ENCODE measurements at regions of chr2 and their contacts with region 1.

Region 1: GRCh38 chr2:219388127-219388844 is 574 bp upstream of the DNPEP start:
- DNase-seq: peak; percentile 99
- H3K4me3 ChIP-seq: peak overlapping the region; percentile 30
- H3K27ac ChIP-seq: peak overlapping the region in 1 of 2 donors; percentile 79
- H3K4me1 ChIP-seq: peaks cover 6% of the 10 kb centered on the region
- H3K27me3 ChIP-seq: no peaks in the 10 kb centered on the region
- CTCF ChIP-seq: peak; percentile 76 to 90 (median 89)
- EP300 ChIP-seq: no peak
- POLR2A ChIP-seq: peak; percentile 21

Region 2: DNA sequence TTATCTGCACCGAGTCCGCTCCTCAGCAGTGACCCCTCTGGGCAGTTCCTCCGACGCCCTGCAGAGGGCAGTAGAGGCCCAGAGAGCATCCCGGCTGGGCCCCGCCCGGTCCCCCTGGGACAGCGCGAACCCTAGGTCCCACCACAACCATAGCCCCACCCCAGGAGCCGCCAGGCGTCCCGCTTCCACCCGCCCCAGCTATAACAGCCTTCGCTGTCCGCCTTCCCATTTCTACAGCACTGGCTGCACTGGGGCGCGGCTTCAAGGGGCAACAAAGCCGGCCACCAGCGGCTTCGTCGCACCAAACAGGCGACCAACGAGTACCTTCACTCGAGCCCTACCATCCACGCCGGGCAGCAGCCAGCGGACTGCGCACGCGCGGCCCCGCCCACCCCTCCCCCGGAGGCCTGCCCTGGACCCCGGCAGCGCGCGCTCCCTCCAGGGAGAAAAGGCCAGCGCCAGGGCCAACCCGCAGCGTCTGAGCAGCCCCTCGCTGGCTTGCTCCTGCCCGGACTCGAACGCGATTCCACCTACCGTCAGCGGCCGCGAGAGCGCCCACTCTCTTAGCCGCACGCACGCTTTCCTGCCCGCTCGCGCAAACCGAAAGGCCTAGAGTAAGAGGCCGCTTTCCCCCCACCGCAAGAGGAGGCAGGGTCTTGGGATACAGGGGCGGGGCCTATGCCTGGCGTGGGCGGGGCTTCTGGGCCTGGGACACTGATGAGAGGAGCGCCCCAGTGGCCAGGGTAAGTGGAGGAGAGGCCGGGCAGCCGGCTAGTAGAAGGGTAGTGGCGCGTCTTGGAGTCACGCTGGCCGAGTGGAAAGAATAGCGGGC is 227.9 kb before region 1 on chr2 and contains the start of gene NHEJ1:
- intact Hi-C with region 1: loop called in 2 of 4 experiments (anchors 5 to 10 kb)
- DNase-seq: peak; percentile 97 to 99 (median 98)
- H3K4me3 ChIP-seq: peak within 1 kb of the TSS; percentile 66
- H3K27ac ChIP-seq: peak within 1 kb of the TSS; percentile 87 to 93
- H3K4me1 ChIP-seq: peaks cover 5% of the 10 kb centered on the region
- H3K27me3 ChIP-seq: no peaks in the 10 kb centered on the region
- CTCF ChIP-seq: peak; percentile 94 to 99 (median 95)
- EP300 ChIP-seq: no peak
- POLR2A ChIP-seq: peak; percentile 62
- total RNA-seq, gene NHEJ1: 14.7 to 19.1 (median 17.1) TPM

Region 3: GRCh38 chr2:219278655-219279516 is 109.4 kb before region 1 on chr2 and contains the start of gene DNAJB2:
- intact Hi-C with region 1: loop called in 1 of 4 experiments (anchors 5 kb)
- DNase-seq: peak; percentile 99 to 100 (median 99)
- H3K4me3 ChIP-seq: peak within 1 kb of the TSS; percentile 53
- H3K27ac ChIP-seq: peak within 1 kb of the TSS; percentile 98
- H3K4me1 ChIP-seq: peaks cover 8% of the 10 kb centered on the region
- H3K27me3 ChIP-seq: no peaks in the 10 kb centered on the region
- CTCF ChIP-seq: no peak
- EP300 ChIP-seq: peak; percentile 82
- POLR2A ChIP-seq: peak; percentile 87
- total RNA-seq, gene DNAJB2: 34.0 to 101 (median 85.7) TPM

Measured in ovary (tissue), 10 donors.